Dendritic cell treated with granulocyte-macrophage colony-stimulating factor and Interleukin-4, amounts not matched to agents 40 ng/mL and 50 ng/mL, for 4 days (primary cell): ENCODE measurements at regions of chr15 and their contacts with region 1.

Region 1: GRCh38 chr15:26082221-26083109 is 219.3 kb upstream of the ATP10A start:
- H3K4me3 Mint-ChIP-seq: peak overlapping the region; percentile 78
- H3K27ac Mint-ChIP-seq: peak overlapping the region; percentile 15
- H3K4me1 Mint-ChIP-seq: peaks cover 16% of the 10 kb centered on the region
- H3K27me3 Mint-ChIP-seq: peaks cover 5% of the 10 kb centered on the region

Region 2: GRCh38 chr15:25323420-25323819 is 759.0 kb before region 1 on chr15:
- intact Hi-C with region 1: loop called (anchors 5 kb)
- H3K4me3 Mint-ChIP-seq: no peak overlapping the region
- H3K27ac Mint-ChIP-seq: no peak overlapping the region
- H3K4me1 Mint-ChIP-seq: no peaks in the 10 kb centered on the region
- H3K27me3 Mint-ChIP-seq: no peaks in the 10 kb centered on the region